ENCODE measurements at regions of chr2 and their contacts with region 1.

Region 1: GRCh38 chr2:1591978-1592907 is 152.1 kb downstream of the PXDN start:
- DNase-seq: no peak
- H3K4me3 ChIP-seq: peak overlapping the region in 1 of 2 donors; percentile 13
- H3K27ac ChIP-seq: peak overlapping the region; percentile 16
- H3K4me1 ChIP-seq: peaks cover 16% of the 10 kb centered on the region
- H3K27me3 ChIP-seq: no peaks in the 10 kb centered on the region
- CTCF ChIP-seq: peak in 2 of 3 experiments; percentile 32 to 71
- POLR2A ChIP-seq: no peak

Region 2: GRCh38 chr2:1192121-1192520 is 400.1 kb before region 1 on chr2:
- intact Hi-C with region 1: no loop called
- DNase-seq: no peak
- H3K4me3 ChIP-seq: no peak overlapping the region
- H3K27ac ChIP-seq: no peak overlapping the region
- H3K4me1 ChIP-seq: no peaks in the 10 kb centered on the region
- H3K27me3 ChIP-seq: no peaks in the 10 kb centered on the region
- CTCF ChIP-seq: no peak
- POLR2A ChIP-seq: no peak

Region 3: DNA sequence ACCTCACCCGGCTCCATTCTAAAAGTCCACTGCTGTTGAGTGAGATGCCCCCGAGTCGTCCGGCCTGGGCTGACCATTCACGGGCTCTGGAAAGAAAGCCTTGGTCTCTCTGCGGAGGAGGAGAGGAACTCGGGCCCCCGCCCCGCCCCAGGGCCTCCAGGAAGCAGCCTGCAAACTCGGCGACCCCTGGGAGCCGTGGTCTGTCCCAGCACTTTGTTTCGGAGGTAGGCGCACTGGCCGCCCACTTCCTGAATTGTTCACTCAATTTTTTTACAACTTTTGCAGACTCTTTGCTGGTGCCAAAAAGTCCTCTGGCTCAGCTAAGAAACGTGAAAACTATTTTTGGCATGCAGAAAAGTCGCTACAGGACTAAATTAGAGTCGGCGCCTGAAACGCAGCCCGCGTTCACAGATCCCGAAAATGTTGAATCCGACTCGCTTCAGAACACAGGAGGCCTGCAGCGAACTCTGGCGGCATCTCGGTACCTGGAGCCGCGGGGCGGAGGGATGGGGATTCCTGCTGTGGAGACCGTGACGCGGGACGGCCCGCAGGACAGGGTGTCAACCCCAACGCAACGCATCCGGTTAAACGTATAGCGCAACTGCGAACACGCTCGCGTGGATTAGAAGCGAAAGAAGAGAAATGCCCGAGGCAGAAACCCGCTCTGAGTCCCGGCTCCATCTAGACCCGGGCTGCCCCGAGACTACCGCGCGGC is 150.6 kb after region 1 on chr2:
- intact Hi-C with region 1: loop called (anchors 5 kb)
- DNase-seq: peak in 1 of 2 donors; percentile 90
- H3K4me3 ChIP-seq: peak overlapping the region; percentile 72 to 88
- H3K27ac ChIP-seq: peak overlapping the region; percentile 90
- H3K4me1 ChIP-seq: peaks cover 27% of the 10 kb centered on the region
- H3K27me3 ChIP-seq: no peaks in the 10 kb centered on the region
- CTCF ChIP-seq: peak in 1 of 3 experiments; percentile 1
- POLR2A ChIP-seq: no peak

Region 4: DNA sequence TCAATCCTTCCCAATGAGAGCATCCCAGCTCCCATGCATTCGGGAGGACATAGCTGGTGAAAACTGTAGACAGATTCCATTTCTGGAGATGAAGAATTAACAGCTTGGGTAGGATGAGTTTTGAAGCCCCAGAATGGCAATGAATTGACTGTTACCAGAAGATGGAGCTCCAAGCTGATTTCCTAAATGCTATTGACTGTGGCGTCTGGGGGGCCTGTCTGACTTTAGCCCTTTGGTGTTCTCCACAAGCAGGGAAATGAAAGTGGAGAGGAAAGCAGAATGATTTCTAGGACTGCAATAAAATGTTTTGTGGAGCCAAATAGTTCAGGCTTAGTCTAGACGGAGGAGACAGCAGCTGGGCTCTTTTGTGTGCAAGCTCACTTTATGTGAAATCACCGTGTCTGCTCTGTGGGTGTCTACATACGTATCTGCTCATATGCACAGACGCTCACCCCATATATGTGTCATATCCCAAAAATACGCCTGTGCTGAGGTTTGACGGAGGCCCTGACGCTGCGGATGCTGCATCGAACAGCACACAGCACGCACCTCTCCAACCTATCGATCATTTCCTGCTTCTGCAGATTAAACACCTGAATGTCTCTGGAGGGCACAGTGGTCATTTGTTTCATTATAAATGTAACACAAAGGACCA is 318.5 kb after region 1 on chr2:
- intact Hi-C with region 1: no loop called
- DNase-seq: peak in 1 of 2 donors; percentile 49
- H3K4me3 ChIP-seq: no peak overlapping the region
- H3K27ac ChIP-seq: no peak overlapping the region
- H3K4me1 ChIP-seq: no peaks in the 10 kb centered on the region
- H3K27me3 ChIP-seq: no peaks in the 10 kb centered on the region
- CTCF ChIP-seq: no peak
- POLR2A ChIP-seq: no peak